Activated CD4-positive, alpha-beta memory T cell treated with anti-CD3 and anti-CD28 coated beads, Interleukin-2, amount 10 ng/mL, durations not matched to agents 7 days and 5 days (primary cell): ENCODE measurements at regions of chr1 and their contacts with region 1.

Region 1: GRCh38 chr1:46413596-46413985 is 19.5 kb downstream of the FAAH start:
- DNase-seq: peak; percentile 73
- H3K4me3 Mint-ChIP-seq: no peak overlapping the region
- H3K27ac Mint-ChIP-seq: peak overlapping the region; percentile 54
- H3K4me1 Mint-ChIP-seq: peaks cover 24% of the 10 kb centered on the region
- H3K27me3 Mint-ChIP-seq: no peaks in the 10 kb centered on the region

Region 2: DNA sequence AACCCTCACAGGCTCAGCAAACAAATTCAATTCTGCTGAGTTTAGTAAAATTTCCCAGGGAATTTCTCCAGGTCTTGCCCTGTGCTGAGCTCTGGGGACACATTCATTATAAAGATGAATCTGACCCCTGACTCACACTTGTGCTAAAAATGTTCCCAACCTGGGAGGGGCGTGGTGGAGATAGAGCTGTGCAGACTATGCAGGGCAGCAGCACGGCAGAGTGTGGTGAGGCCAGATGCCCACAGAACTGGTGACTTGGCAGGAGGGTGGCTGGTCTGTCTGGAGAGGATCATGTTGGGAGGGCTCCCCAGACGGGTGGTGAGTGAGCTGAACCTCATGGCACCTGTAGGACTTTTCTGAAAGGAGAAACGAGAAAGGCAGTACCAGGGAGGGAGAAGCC is 12.1 kb after region 1 on chr1:
- CTCF ChIA-PET with region 1: interaction called, 12 read pairs
- POLR2A ChIA-PET with region 1: interaction called, 26 read pairs
- DNase-seq: no peak
- H3K4me3 Mint-ChIP-seq: peak overlapping the region; percentile 65
- H3K27ac Mint-ChIP-seq: no peak overlapping the region
- H3K4me1 Mint-ChIP-seq: peaks cover 30% of the 10 kb centered on the region
- H3K27me3 Mint-ChIP-seq: peaks cover 8% of the 10 kb centered on the region